Activated CD8-positive, alpha-beta T cell treated with anti-CD3 and anti-CD28 coated beads for 36 hours (primary cell): ENCODE measurements at regions of chr6 and their contacts with region 1.

Region 1: DNA sequence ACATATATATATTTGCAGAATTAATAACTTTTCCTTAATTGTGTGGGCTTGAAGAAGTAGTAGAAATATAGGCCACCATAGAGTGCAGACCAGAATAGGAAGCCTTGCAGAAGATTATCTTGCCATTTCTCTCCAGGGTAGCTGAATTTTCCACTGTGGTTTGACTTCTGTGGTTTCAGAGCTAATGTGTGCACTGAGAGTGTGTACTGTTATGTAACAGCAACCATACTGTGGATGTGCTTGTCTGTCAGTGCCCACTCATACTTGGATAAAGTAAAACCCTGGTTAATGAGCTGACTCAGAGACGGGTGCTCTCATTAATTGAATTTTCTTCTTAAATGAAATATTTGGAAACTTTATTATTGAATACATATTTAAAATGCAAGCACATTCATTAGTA is 57.2 kb downstream of the CEP43 start:
- DNase-seq: peak; percentile 70
- ATAC-seq: peak; percentile 90
- H3K4me3 Mint-ChIP-seq: no peak overlapping the region
- H3K27ac Mint-ChIP-seq: no peak overlapping the region
- H3K4me1 Mint-ChIP-seq: peaks cover 26% of the 10 kb centered on the region
- H3K27me3 Mint-ChIP-seq: peaks cover 2% of the 10 kb centered on the region
- CTCF ChIP-seq: no peak

Region 2: DNA sequence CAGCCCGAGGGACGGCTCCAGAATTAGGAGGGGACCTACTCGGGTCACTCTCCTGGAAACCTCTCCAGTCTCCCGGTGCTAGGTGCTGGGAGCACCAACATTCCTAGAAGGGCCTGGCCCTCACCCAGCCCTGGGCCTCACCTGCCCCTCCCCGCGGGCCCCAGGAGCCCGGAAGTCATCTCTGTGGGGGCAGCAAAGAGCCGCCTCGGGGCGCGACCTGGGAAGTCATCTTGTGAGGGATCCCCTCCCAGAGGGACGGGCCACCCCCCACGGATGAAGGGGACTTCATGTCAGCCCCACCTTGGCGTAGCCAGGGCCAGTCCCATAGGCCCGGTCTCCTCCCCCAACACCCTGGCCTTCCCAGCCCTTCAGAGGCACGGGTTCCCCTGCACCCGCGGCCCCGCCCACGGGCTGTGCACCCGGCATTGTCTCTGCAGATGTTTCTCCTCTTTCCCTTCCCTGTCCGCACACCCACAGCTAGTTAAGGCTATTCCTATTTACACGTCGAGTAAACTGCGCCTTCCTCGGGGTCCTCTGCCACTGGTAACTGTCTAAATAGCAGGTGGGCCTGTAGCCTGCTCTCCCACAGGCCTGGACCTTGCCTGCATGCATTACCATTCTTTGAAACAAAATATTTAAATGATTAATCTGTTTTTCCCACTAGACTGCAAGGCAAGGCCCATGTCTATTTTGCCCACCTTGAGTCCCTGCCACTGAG is 99.1 kb before region 1 on chr6:
- CTCF ChIA-PET with region 1: no interaction called
- POLR2A ChIA-PET with region 1: no interaction called
- intact Hi-C with region 1: no loop called
- DNase-seq: peak; percentile 76
- ATAC-seq: peak; percentile 38
- H3K4me3 Mint-ChIP-seq: peak overlapping the region; percentile 90
- H3K27ac Mint-ChIP-seq: peak overlapping the region; percentile 86
- H3K4me1 Mint-ChIP-seq: peaks cover 60% of the 10 kb centered on the region
- H3K27me3 Mint-ChIP-seq: no peaks in the 10 kb centered on the region
- CTCF ChIP-seq: no peak

Region 3: DNA sequence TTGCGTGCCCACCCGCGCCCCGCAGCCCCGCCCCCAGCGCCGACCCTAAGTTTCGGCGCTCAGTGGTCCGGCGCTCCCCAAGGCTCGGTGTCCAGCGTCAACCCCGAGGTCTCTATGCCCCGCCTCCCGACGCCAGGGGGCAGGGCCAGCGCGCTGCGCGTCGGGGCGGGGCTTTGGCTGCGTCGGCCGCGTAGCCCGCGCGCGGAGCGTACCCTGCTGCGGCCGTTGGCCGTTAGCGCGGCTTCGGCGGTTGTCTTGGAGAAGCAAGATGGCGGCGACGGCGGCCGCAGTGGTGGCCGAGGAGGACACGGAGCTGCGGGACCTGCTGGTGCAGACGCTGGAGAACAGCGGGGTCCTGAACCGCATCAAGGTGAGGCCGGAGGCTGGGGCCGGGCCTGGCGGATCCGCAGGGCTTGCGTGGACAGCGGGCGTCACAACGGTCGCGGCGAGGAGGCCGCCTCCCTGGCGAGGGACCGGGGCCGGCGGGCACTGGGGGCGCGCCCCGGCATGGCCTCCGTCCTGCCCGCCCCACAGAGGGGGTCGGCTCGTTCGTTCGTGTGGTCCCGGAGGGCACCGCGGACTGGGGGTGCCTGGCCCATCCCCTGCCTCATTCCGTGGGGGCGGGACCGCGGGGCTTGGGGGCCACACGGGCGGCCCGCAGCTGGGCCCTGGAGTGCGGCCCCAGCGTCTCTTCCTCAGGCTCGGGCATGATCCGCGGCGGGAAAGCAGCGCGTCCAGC is 57.1 kb before region 1 on chr6 and contains the start of gene CEP43:
- CTCF ChIA-PET with region 1: no interaction called
- POLR2A ChIA-PET with region 1: no interaction called
- intact Hi-C with region 1: no loop called
- DNase-seq: peak; percentile 92
- ATAC-seq: peak; percentile 97
- H3K4me3 Mint-ChIP-seq: peak within 1 kb of the TSS; percentile 85
- H3K27ac Mint-ChIP-seq: peak within 1 kb of the TSS; percentile 87
- H3K4me1 Mint-ChIP-seq: peaks cover 24% of the 10 kb centered on the region
- H3K27me3 Mint-ChIP-seq: no peaks in the 10 kb centered on the region
- CTCF ChIP-seq: no peak
- total RNA-seq, gene CEP43: 20.2 to 21.3 TPM

Region 4: DNA sequence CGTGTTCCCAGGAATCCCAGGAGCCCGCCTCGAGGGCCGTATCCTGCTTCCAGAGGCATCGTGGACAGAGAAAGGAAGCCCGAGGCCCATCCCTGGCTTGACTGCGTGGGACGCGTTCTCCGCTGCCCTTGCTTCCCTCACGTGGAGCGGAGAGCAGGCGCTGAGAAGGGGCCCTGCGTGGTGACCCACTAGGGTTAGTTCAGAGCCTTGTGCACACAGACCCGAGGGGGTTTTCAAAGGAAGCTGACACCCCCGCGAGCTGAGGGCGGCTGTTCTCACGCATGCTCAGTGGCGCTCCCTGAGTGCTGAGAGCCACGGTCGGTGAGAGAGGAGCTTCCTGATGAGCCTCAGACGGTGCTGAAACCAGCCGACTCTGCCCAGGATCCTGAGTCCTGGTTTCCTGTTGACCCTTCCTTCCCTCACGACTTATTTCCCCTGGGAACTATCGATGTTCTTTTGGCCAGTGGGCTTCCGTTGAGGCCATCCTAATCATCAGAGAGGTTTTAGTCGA is 37.6 kb after region 1 on chr6:
- CTCF ChIA-PET with region 1: no interaction called
- POLR2A ChIA-PET with region 1: no interaction called
- intact Hi-C with region 1: loop called (anchors 5 kb)
- DNase-seq: peak; percentile 87
- ATAC-seq: peak; percentile 75
- H3K4me3 Mint-ChIP-seq: peak overlapping the region; percentile 63
- H3K27ac Mint-ChIP-seq: peak overlapping the region; percentile 82
- H3K4me1 Mint-ChIP-seq: peaks cover 60% of the 10 kb centered on the region
- H3K27me3 Mint-ChIP-seq: no peaks in the 10 kb centered on the region
- CTCF ChIP-seq: no peak